CD14-positive monocyte (primary cell): ENCODE measurements at regions of chr13 and their contacts with region 1.

Region 1: GRCh38 chr13:99281811-99282263 is 23.7 kb upstream of the GPR18 start:
- DNase-seq: peak; percentile 97 to 98 (median 97)
- H3K4me3 ChIP-seq: peak overlapping the region in 1 of 3 experiments; percentile 20
- H3K4me3 Mint-ChIP-seq: peak overlapping the region; percentile 13 to 69
- H3K27ac ChIP-seq: peak overlapping the region; percentile 85 to 98
- H3K27ac Mint-ChIP-seq: peak overlapping the region; percentile 98 to 100 (median 99)
- H3K4me1 ChIP-seq: peaks cover 88 to 96% of the 10 kb centered on the region in 2 donors
- H3K4me1 Mint-ChIP-seq: peaks cover 90% of the 10 kb centered on the region
- H3K27me3 ChIP-seq: no peaks in the 10 kb centered on the region
- H3K27me3 Mint-ChIP-seq: peaks cover 0 to 2% (median 0%) of the 10 kb centered on the region in 3 donors
- CTCF ChIP-seq: no peak

Region 2: GRCh38 chr13:99307648-99308339 is 26.0 kb after region 1 on chr13:
- intact Hi-C with region 1: loop called (anchors 2 kb)
- DNase-seq: peak; percentile 79 to 90 (median 83)
- H3K4me3 ChIP-seq: no peak overlapping the region
- H3K4me3 Mint-ChIP-seq: peak overlapping the region in 1 of 2 donors; percentile 91
- H3K27ac ChIP-seq: peak overlapping the region; percentile 41 to 99
- H3K27ac Mint-ChIP-seq: peak overlapping the region; percentile 80 to 99 (median 97)
- H3K4me1 ChIP-seq: peaks cover 77 to 88% of the 10 kb centered on the region in 2 donors
- H3K4me1 Mint-ChIP-seq: peaks cover 79% of the 10 kb centered on the region
- H3K27me3 ChIP-seq: no peaks in the 10 kb centered on the region
- H3K27me3 Mint-ChIP-seq: peaks cover 0 to 1% (median 0%) of the 10 kb centered on the region in 3 donors
- CTCF ChIP-seq: no peak

Region 3: DNA sequence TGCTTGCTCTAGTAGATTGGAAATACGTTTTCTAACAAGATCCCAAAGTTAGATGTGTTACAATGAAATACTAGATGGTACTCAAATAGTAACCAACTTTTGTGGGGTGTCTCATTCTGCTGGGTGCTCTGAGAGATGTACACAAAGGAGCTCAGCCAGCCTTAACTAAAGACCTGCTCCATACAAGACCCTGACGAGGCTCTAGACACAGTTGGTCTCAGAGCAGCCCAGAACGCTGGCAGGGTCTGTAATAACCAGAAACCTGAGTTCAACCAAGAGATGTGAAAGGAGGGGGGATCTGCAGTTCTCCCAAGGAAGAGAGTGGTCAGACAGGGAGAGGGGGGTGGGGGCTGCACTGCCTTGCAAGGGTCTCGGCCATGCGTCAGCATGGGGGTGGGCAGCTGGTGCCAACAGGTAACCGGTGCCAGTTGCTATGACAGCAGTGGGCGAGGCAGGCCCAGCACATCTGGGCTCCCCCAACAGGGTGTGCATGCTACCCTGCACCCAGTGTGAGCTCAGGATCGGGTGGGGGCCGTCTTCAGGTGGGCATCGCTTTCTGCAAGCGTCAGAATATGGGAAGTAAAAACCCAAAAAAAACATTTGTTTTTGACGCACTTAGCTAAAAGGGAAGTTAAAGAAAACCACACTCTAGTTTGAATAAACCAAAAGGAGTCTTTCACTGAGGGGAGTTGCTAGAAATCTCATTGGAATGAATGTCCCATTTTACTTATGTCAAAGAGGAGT is 93.3 kb after region 1 on chr13:
- intact Hi-C with region 1: loop called in 1 of 2 experiments (anchors 10 kb)
- DNase-seq: peak; percentile 58 to 77 (median 65)
- H3K4me3 ChIP-seq: peak overlapping the region in 2 of 3 experiments; percentile 19 to 52
- H3K4me3 Mint-ChIP-seq: peak overlapping the region; percentile 59 to 76
- H3K27ac ChIP-seq: peak overlapping the region; percentile 82 to 89
- H3K27ac Mint-ChIP-seq: peak overlapping the region; percentile 83 to 97 (median 95)
- H3K4me1 ChIP-seq: peaks cover 40 to 51% of the 10 kb centered on the region in 2 donors
- H3K4me1 Mint-ChIP-seq: peaks cover 67% of the 10 kb centered on the region
- H3K27me3 ChIP-seq: no peaks in the 10 kb centered on the region
- H3K27me3 Mint-ChIP-seq: no peaks in the 10 kb centered on the region
- CTCF ChIP-seq: no peak

Region 4: GRCh38 chr13:99522298-99522697 is 240.5 kb after region 1 on chr13:
- intact Hi-C with region 1: no loop called
- DNase-seq: no peak
- H3K4me3 ChIP-seq: no peak overlapping the region
- H3K4me3 Mint-ChIP-seq: no peak overlapping the region
- H3K27ac ChIP-seq: no peak overlapping the region
- H3K27ac Mint-ChIP-seq: peak overlapping the region in 1 of 7 donors; percentile 34
- H3K4me1 ChIP-seq: no peaks in the 10 kb centered on the region
- H3K4me1 Mint-ChIP-seq: peaks cover 3% of the 10 kb centered on the region
- H3K27me3 ChIP-seq: no peaks in the 10 kb centered on the region
- H3K27me3 Mint-ChIP-seq: no peaks in the 10 kb centered on the region
- CTCF ChIP-seq: no peak